ENCODE measurements at regions of chr7 and their contacts with region 1.

Region 1: DNA sequence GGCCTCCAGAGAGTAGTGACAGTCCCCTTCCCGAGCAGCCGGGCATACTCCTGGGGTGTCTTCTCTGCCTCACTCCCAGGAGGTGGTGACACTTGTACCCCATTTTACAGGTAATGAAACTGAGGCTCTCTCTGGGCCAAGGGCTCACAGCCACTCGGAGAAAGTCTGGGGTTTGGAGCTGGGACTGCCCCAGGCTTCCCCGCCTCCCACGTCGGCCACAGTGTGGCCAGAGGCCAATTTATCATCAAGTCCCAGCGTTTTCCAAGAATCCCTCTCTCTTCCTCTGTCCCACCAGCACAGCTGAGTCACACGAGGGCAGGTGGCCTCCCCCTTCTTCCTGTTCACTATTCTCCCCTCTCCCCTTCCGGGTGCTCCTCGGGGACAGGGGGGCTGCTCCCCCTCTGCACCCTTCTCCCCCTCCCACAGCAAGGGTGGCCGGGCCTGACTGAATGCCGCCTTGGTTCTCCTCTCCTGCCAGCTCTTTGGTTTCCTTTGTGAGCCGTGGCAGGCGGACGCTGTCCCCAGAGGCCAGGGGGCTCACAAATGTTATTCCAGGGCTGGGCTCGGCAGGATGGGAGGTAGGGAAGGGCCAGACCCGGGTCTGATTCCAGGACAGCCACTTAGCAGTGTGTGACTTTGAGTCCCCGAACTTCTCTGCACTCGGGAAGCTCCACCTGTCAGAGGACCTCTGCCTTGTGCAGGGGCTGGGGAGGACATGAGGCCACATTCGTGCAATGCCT is 17.7 kb downstream of the CLIP2 start:
- DNase-seq: peak; percentile 21 to 75 (median 58)
- H3K4me3 ChIP-seq: peak overlapping the region in 56 of 59 donors; percentile 7 to 62 (median 37)
- H3K27ac ChIP-seq: peak overlapping the region; percentile 47 to 95 (median 89)
- H3K27me3 ChIP-seq: no peaks in the 10 kb centered on the region
- CTCF ChIP-seq: peak in 8 of 56 donors; percentile 7 to 18 (median 10)

Region 2: DNA sequence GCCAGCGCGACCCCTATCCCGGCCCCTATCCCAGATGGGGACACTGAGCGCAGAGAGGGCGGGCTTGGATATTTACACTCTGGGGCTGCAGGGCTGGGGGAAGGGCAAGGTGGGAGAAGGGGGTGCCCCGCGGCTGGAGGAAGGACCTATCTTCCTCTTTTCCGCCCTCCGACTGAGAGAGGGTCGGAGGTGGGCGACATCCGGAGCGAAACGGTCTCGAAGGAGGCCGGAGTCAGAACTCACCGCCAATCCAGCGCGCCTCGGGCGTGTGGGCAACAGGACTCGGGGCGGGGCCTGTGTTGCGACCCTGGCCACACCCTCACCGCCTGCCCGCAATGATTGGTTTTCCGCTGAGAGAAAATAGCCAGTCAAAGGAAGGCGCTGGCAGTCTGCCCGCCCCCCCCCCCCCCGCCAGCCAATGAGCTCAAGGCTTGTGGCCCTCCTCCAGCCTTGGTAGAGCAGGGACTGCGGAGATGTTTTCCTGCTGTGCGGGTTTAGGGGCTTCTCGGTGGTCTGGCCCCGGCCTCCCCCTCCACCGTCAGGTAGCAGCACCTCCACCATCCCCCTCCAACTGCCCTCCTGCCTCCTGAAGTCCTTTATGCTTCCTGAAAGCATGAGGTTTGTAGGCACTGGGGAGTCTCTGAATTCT is 464.5 kb before region 1 on chr7 and contains the start of gene METTL27:
- intact Hi-C with region 1: loop called in 1 of 2 experiments (anchors 10 kb)
- DNase-seq: peak; percentile 81 to 95 (median 94)
- H3K4me3 ChIP-seq: peak within 1 kb of the TSS; percentile 37 to 93 (median 72)
- H3K27ac ChIP-seq: peak within 1 kb of the TSS in 41 of 59 donors; percentile 7 to 79 (median 48)
- H3K27me3 ChIP-seq: no peaks in the 10 kb centered on the region
- CTCF ChIP-seq: peak in 5 of 56 donors; percentile 8 to 21 (median 13)
- total RNA-seq, gene METTL27: 0.54 to 7.6 (median 2.3) TPM in 118 of 120 experiments, not detected in the others

Region 3: DNA sequence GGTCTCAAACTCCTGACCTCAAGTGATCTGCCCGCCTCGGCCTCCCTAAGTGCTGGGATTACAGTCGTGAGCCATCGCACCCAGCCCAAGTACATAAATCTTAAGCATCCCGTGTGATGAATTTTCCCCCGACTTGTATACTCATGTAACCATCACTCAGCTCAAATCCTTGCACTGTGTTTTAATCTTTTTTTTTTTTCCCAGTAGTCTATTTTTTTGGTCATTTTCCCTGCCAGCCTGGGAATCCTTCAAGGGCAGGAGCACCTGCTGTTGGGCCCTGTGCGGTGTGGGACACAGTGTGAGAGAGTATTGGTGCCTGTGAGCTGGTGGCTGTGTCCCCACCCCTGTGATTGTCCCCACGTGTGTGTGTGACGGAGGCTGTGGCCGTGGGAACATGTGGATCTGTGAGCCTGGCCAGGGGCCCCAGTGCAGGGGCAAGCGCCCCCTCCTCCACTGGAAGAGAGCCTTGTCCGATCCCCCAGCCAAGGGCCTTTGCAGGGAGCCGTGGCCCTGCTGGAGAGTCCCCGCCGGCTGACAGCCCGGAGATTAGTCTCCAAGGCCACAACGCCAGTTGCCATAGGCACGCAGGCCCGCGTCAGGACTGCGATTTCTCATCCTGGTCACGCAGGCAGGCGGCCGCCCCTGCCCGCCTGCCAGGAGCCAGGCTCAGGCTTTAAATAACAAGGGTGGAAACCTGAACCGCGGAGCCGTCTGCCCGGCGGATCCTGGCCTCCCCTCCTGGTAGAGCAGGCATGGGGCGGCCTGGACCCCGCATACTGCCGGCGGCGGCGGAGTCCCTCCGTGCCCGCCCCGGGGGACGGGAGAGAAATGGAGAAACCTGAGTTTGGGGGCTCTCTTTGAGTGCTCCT is 173.3 kb after region 1 on chr7:
- intact Hi-C with region 1: no loop called
- DNase-seq: peak; percentile 65 to 89 (median 83)
- H3K4me3 ChIP-seq: peak overlapping the region; percentile 9 to 65 (median 46)
- H3K27ac ChIP-seq: peak overlapping the region; percentile 29 to 97 (median 90)
- H3K27me3 ChIP-seq: no peaks in the 10 kb centered on the region
- CTCF ChIP-seq: peak in 2 of 56 donors; percentile 6 to 9

Measured in dorsolateral prefrontal cortex (tissue), 120 donors.